Ovary (tissue), 10 donors: ENCODE measurements at regions of chr17 and their contacts with region 1.

Region 1: GRCh38 chr17:42667123-42667951 is 8.3 kb downstream of the TUBG2 start:
- DNase-seq: peak in 3 of 5 donors; percentile 56 to 74 (median 57)
- H3K4me3 ChIP-seq: no peak overlapping the region
- H3K27ac ChIP-seq: peak overlapping the region in 1 of 2 donors; percentile 57
- H3K4me1 ChIP-seq: peaks cover 15% of the 10 kb centered on the region
- H3K27me3 ChIP-seq: no peaks in the 10 kb centered on the region
- CTCF ChIP-seq: no peak
- EP300 ChIP-seq: no peak
- POLR2A ChIP-seq: no peak

Region 2: GRCh38 chr17:42609182-42609813 is 58.0 kb before region 1 on chr17 and contains the starts of genes RETREG3 and TUBG1:
- intact Hi-C with region 1: loop called in 1 of 4 experiments (anchors 10 kb)
- DNase-seq: peak; percentile 98 to 99 (median 99)
- H3K4me3 ChIP-seq: peak within 1 kb of the TSS; percentile 82
- H3K27ac ChIP-seq: peak within 1 kb of the TSS; percentile 81 to 91
- H3K4me1 ChIP-seq: peaks cover 13% of the 10 kb centered on the region
- H3K27me3 ChIP-seq: no peaks in the 10 kb centered on the region
- CTCF ChIP-seq: peak in 2 of 3 donors; percentile 48 to 61
- EP300 ChIP-seq: no peak
- POLR2A ChIP-seq: peak; percentile 60
- total RNA-seq, gene RETREG3: 39.3 to 63.0 (median 46.4) TPM
- total RNA-seq, gene TUBG1: 12.8 to 41.2 (median 25.6) TPM